ENCODE measurements at regions of chr6 and their contacts with region 1.

Region 1: DNA sequence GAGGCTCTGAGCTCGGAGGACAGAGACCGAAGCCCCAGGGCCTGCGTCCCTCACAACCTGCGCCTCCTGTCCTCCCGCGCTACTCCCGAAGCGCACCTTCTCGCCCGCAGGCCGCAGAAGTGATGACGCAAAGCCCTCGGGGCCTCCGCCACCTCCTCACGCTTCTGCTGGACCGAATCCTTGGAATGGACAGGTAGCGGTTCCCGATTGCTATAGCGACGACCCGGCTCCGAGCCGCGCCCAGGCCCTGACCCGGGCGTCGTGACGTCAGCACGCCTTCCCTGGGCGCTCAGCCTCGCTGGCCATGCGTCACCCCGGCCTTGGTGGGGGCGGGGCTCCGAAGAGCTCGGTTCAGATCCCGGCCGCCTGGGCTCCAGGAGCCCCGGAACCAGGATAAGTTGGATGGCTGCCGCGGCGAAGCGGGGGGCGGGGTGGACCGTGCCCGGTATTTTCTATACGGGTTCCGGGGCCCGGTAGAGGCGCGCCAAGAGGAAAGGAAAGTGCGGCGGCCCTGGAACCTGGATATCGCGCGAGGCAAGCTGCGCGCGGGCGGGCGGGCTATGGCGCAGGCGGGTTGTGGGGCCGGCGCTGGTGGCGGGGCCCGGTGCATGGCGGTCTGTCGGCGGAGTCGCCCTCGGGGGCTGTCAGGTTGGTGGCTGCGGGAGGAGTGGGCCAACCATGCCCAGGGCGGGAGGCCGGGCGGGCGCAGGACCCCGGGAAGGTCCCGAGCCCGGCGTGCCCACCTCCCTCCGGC is at the start of gene ZNF76:
- DNase-seq: peak; percentile 98
- CTCF ChIP-seq: peak; percentile 56

Region 2: GRCh38 chr6:33950472-33950881 is 1308.9 kb before region 1 on chr6:
- CTCF ChIA-PET with region 1: no interaction called
- POLR2A ChIA-PET with region 1: no interaction called
- DNase-seq: no peak
- CTCF ChIP-seq: no peak

Region 3: DNA sequence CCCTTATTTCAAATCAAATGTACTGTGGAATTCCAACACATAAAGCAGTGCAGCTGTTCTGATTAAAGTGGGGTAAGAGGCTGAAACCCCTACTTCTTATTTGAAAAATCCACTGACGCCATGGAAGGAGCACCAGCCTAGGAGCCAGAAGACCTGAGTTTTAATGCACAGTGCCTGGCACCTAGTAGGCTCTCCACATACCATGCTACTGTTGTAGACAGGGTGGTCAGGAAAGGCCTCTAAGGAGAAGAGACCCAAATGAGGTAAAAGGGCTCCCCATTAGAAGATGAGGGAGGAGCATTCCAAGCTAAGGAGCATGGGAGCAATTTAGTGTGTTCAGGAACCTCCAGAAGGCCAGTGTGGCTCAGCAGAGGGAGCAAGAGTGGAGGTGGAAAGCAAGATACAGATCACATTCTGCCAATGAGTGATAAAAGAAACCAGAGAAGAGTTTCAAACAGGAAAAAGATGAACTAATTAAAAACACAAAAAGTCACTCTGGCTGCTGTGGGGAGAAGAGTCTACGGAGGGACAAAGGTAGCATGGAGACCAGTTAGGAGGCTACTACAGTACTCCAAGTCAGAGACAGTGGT is 11.6 kb before region 1 on chr6:
- CTCF ChIA-PET with region 1: interaction called, 63 read pairs
- POLR2A ChIA-PET with region 1: no interaction called
- DNase-seq: peak; percentile 46
- CTCF ChIP-seq: peak; percentile 23

Measured in GM10248 (cell line).